ENCODE measurements at regions of chr13 and their contacts with region 1.

Region 1: GRCh38 chr13:40809471-40809870 is 20.1 kb downstream of the SLC25A15 start:
- DNase-seq: no peak
- H3K4me3 ChIP-seq: no peak overlapping the region
- H3K27ac ChIP-seq: no peak overlapping the region
- H3K4me1 ChIP-seq: peaks cover 0 to 6% (median 0%) of the 10 kb centered on the region in 4 donors
- H3K27me3 ChIP-seq: no peaks in the 10 kb centered on the region
- CTCF ChIP-seq: no peak
- EP300 ChIP-seq: no peak
- POLR2A ChIP-seq: no peak

Region 2: DNA sequence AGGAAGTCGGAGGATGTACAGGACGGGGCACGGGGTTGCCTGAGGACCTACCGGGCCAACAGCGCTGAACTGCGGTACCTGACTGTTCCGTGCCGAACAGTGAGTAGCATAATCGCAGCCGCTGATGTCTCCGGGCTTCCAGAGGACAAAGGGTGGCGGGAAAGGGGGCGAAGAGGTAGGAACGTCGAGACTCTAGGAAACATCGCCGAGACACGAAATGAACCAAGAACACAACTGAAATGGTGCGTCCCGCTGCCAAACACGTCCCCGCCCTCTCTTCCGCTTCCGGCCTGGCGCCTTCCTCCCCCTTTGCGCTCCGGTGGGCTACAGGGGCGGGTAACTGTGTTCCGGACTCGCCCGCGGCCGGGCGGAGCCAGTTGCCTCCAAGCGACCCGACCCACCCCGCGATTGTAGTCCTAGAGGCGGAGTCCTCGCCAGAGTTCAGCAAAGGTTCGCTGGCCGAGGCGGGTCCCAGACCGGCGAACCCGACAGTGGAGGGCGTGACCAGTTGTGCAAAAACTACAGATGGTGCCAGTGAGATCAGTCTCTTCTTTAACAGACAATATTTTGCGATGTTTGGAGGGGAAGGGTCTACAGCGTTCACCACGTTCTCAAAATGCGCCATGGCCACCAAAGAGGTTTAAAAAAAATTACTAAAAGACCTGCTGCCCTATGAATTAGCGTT is 38.4 kb before region 1 on chr13 and contains the start of gene MRPS31:
- in situ Hi-C with region 1: no loop called
- intact Hi-C with region 1: no loop called
- DNase-seq: peak; percentile 97
- H3K4me3 ChIP-seq: peak within 1 kb of the TSS; percentile 57 to 80 (median 58)
- H3K27ac ChIP-seq: peak within 1 kb of the TSS; percentile 84 to 91 (median 88)
- H3K4me1 ChIP-seq: peaks cover 7 to 23% (median 10%) of the 10 kb centered on the region in 4 donors
- H3K27me3 ChIP-seq: no peaks in the 10 kb centered on the region
- CTCF ChIP-seq: peak in 1 of 5 experiments; percentile 5
- EP300 ChIP-seq: no peak
- POLR2A ChIP-seq: peak; percentile 66
- total RNA-seq, gene MRPS31: 16.1 to 50.2 (median 25.0) TPM

Region 3: GRCh38 chr13:41299316-41300094 is 490.0 kb after region 1 on chr13:
- in situ Hi-C with region 1: no loop called
- intact Hi-C with region 1: loop called (anchors 5 kb)
- DNase-seq: no peak
- H3K4me3 ChIP-seq: no peak overlapping the region
- H3K27ac ChIP-seq: no peak overlapping the region
- H3K4me1 ChIP-seq: no peaks in the 10 kb centered on the region
- H3K27me3 ChIP-seq: no peaks in the 10 kb centered on the region
- CTCF ChIP-seq: no peak
- EP300 ChIP-seq: no peak
- POLR2A ChIP-seq: no peak

Measured in transverse colon (tissue), 4 donors.